Activated CD8-positive, alpha-beta T cell treated with anti-CD3 and anti-CD28 coated beads, Interleukin-2, amount 10 ng/mL, durations not matched to agents 7 days and 5 days (primary cell): ENCODE measurements at regions of chr18 and their contacts with region 1.

Region 1: GRCh38 chr18:12934454-12935071 is 13.2 kb upstream of the SEH1L start:
- DNase-seq: peak; percentile 84
- ATAC-seq: peak; percentile 88
- H3K4me3 Mint-ChIP-seq: peak overlapping the region; percentile 5
- H3K27ac Mint-ChIP-seq: no peak overlapping the region
- H3K4me1 Mint-ChIP-seq: peaks cover 9% of the 10 kb centered on the region
- H3K27me3 Mint-ChIP-seq: peaks cover 10% of the 10 kb centered on the region

Region 2: DNA sequence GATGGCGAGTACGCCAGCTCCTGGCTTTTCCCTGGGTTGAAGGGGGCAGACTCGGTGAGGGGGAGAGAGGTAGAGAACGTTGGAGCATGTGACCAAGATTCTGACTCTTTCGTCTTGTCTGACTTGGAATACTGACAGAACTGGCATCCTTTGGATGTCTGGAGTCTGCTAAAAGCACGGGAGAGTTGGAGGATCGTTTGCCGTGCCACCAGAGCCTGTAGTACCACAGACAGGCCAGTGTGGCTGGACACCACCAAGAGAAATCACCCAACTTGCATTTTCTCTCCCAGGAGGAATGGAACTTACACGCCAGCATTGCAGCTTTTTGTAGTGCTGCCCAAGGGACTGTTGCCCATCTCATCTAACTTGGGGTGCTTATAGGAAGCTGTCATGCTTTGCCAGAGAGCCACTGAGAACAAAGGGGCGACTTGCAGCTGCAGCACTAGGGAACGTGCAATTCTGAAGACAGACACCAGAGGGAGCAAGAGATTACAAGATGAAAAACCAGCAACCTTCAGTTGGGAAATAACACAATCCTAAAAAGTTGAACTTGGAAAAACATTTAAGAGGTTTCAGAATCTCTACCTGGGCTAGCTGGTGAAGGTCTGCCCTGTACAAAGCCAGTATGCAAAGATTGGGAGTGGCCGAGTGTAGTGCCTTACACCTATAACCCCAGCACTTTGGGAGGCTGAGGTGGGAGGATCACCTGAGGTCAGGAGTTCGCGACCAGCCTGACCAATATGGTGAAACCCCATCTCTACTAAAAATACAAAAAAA is 207.6 kb before region 1 on chr18:
- CTCF ChIA-PET with region 1: interaction called, 140 read pairs
- POLR2A ChIA-PET with region 1: no interaction called
- DNase-seq: peak; percentile 75
- ATAC-seq: peak; percentile 61
- H3K4me3 Mint-ChIP-seq: no peak overlapping the region
- H3K27ac Mint-ChIP-seq: no peak overlapping the region
- H3K4me1 Mint-ChIP-seq: peaks cover 3% of the 10 kb centered on the region
- H3K27me3 Mint-ChIP-seq: no peaks in the 10 kb centered on the region

Region 3: GRCh38 chr18:12750076-12750714 is 184.4 kb before region 1 on chr18:
- CTCF ChIA-PET with region 1: interaction called, 51 read pairs
- POLR2A ChIA-PET with region 1: no interaction called
- DNase-seq: peak; percentile 62
- ATAC-seq: peak; percentile 61
- H3K4me3 Mint-ChIP-seq: no peak overlapping the region
- H3K27ac Mint-ChIP-seq: peak overlapping the region; percentile 48
- H3K4me1 Mint-ChIP-seq: peaks cover 24% of the 10 kb centered on the region
- H3K27me3 Mint-ChIP-seq: no peaks in the 10 kb centered on the region

Region 4: GRCh38 chr18:12890506-12890905 is 44.1 kb before region 1 on chr18:
- CTCF ChIA-PET with region 1: interaction called, 23 read pairs
- POLR2A ChIA-PET with region 1: no interaction called
- DNase-seq: no peak
- ATAC-seq: peak; percentile 56
- H3K4me3 Mint-ChIP-seq: no peak overlapping the region
- H3K27ac Mint-ChIP-seq: no peak overlapping the region
- H3K4me1 Mint-ChIP-seq: peaks cover 13% of the 10 kb centered on the region
- H3K27me3 Mint-ChIP-seq: peaks cover 10% of the 10 kb centered on the region

Region 5: GRCh38 chr18:12911025-12911928 is 23.3 kb before region 1 on chr18:
- CTCF ChIA-PET with region 1: interaction called, 15 read pairs
- POLR2A ChIA-PET with region 1: no interaction called
- DNase-seq: peak; percentile 62
- ATAC-seq: peak; percentile 96
- H3K4me3 Mint-ChIP-seq: peak overlapping the region; percentile 45
- H3K27ac Mint-ChIP-seq: peak overlapping the region; percentile 30
- H3K4me1 Mint-ChIP-seq: peaks cover 10% of the 10 kb centered on the region
- H3K27me3 Mint-ChIP-seq: peaks cover 8% of the 10 kb centered on the region

Region 6: DNA sequence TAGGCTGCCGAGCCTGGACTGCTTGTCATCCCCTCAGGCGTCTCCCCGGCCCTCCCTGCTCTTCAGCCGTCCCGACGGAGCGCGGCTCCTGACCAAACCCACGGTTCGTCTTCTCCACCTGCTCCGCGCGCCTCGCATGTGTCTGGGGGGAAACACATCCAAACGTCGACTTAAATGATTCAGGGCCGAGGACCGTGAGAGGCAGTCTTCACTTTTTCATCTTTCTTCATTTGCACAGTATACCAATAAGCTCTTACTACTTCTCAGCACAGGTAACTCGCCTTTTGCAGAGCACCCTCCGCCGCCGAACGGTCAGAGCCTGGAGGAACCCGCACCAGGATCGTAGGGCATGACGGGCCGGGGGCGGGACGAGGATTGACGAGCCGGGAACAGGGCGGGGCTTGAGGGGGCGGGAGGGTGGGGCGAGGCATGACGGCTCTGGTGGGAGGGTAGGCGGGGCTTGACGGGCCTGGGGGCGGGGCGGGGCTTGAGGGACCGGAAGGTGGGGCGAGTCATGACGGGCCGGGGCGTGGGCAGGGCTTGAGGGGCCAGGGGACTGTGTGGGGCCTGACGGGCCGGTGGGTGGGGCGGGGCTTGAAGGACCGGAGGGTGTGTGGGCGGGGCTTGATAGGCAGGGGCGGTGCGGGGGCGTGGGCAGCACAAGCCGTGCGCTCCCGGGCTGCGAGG is 12.9 kb after region 1 on chr18 and contains the start of gene SEH1L:
- CTCF ChIA-PET with region 1: interaction called, 39 read pairs
- POLR2A ChIA-PET with region 1: no interaction called
- DNase-seq: peak; percentile 99
- ATAC-seq: peak; percentile 90
- H3K4me3 Mint-ChIP-seq: peak within 1 kb of the TSS; percentile 94
- H3K27ac Mint-ChIP-seq: peak within 1 kb of the TSS; percentile 98
- H3K4me1 Mint-ChIP-seq: peaks cover 51% of the 10 kb centered on the region
- H3K27me3 Mint-ChIP-seq: no peaks in the 10 kb centered on the region
- total RNA-seq, gene SEH1L: 58.6 to 62.3 TPM